Calu3 (cell line): ENCODE measurements at regions of chr5 and their contacts with region 1.

Region 1: GRCh38 chr5:136132557-136133221 is at the start of gene SMAD5:
- DNase-seq: peak; percentile 99
- H3K4me3 Mint-ChIP-seq: peak within 1 kb of the TSS; percentile 99
- H3K27ac Mint-ChIP-seq: peak within 1 kb of the TSS; percentile 95
- H3K4me1 Mint-ChIP-seq: peaks cover 31% of the 10 kb centered on the region
- H3K27me3 Mint-ChIP-seq: no peaks in the 10 kb centered on the region
- CTCF ChIP-seq: no peak
- total RNA-seq, gene SMAD5: 93.1 and 94.2 TPM in 2 replicates

Region 2: GRCh38 chr5:136018814-136019783 is 113.6 kb before region 1 on chr5:
- CTCF ChIA-PET with region 1: no interaction called
- intact Hi-C with region 1: loop called (anchors 5 kb)
- DNase-seq: no peak
- H3K4me3 Mint-ChIP-seq: no peak overlapping the region
- H3K27ac Mint-ChIP-seq: peak overlapping the region; percentile 88
- H3K4me1 Mint-ChIP-seq: peaks cover 86% of the 10 kb centered on the region
- H3K27me3 Mint-ChIP-seq: no peaks in the 10 kb centered on the region
- CTCF ChIP-seq: no peak

Region 3: DNA sequence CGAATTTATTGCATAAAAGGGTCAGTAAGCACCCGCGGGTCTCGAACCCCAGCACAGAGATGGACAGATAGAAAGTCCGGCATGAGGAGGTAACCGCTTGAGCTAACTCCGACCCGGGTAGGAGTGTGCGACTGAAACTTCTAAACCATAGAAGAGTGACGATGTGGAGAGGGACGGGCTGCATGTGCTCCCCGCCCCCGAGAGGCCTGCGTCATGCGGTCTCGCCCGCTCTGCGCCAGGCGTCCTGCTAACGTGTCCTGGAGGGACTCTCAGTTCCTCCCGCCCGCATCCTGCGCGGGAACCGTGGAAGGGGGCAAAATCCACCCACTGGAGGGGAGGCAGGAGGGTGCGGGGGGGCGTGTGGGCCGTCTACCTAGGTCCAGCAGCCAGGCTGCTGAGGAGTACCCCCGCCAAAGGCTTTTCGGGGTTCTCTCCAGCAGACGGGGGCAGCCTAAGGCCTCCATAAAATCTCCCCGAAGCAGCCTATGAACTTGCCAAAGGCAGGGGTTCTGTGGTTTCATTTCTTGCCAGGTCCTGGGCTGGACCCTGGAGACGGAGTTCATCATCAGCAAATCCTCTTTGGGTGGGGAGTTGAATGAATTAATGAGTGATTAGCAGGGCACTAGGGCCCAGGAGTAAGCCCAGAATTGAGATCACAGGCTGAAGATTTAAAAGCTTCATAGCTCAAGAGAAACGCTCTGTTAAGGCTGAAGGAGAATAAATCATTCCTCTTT is 52.0 kb before region 1 on chr5:
- CTCF ChIA-PET with region 1: no interaction called
- intact Hi-C with region 1: loop called (anchors 2 kb)
- DNase-seq: peak; percentile 95
- H3K4me3 Mint-ChIP-seq: peak overlapping the region; percentile 71
- H3K27ac Mint-ChIP-seq: peak overlapping the region; percentile 99
- H3K4me1 Mint-ChIP-seq: no peaks in the 10 kb centered on the region
- H3K27me3 Mint-ChIP-seq: no peaks in the 10 kb centered on the region
- CTCF ChIP-seq: no peak